Caco-2 (cell line): ENCODE measurements at regions of chr4 and their contacts with region 1.

Region 1: DNA sequence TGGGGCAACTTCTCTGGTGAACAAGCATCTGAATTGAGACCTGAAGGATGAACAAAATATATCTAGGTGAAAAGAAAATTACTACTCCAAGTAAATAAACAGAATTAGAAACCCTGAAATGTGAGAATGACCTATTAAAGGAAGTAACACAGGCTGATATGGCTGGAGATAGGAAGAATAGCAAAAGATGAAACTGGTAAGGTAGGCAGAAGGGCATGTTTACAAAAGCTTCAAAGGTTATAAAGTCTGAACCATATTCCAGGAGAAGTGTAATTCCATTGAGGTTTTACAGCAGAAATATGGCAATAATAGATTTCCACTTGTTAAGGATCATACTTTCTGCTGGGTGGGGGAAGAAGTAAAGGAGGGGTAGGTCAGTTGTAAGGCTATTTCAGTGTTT is 452.0 kb downstream of the GBA3 start:
- DNase-seq: no peak
- H3K4me3 ChIP-seq: no peak overlapping the region
- H3K4me3 Mint-ChIP-seq: no peak overlapping the region
- H3K27ac Mint-ChIP-seq: no peak overlapping the region
- H3K4me1 ChIP-seq: no peaks in the 10 kb centered on the region
- H3K4me1 Mint-ChIP-seq: peaks cover 7% of the 10 kb centered on the region
- H3K27me3 ChIP-seq: no peaks in the 10 kb centered on the region
- H3K27me3 Mint-ChIP-seq: no peaks in the 10 kb centered on the region
- CTCF ChIP-seq: no peak

Region 2: DNA sequence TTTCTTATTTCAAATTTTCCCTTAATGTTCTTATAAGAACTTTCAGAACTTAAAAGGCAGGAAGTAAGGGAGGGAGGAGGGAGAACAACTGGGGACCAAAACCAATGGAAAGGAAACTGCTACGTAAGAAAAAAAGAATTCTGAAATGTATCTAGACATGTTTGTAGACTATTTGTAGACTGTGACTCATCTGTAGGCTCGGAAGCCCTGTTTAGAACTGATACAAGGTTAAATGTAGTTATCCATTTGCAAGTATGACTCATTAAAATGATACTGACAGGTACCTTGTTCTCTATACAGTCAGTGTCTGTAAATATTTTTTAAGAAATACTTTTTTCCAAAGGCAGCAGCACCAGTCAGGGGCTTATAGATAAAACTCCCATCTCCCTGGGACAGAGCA is 1237.7 kb after region 1 on chr4:
- CTCF ChIA-PET with region 1: no interaction called
- POLR2A ChIA-PET with region 1: no interaction called
- intact Hi-C with region 1: loop called (anchors 10 kb)
- DNase-seq: no peak
- H3K4me3 ChIP-seq: no peak overlapping the region
- H3K4me3 Mint-ChIP-seq: no peak overlapping the region
- H3K27ac Mint-ChIP-seq: no peak overlapping the region
- H3K4me1 ChIP-seq: no peaks in the 10 kb centered on the region
- H3K4me1 Mint-ChIP-seq: no peaks in the 10 kb centered on the region
- H3K27me3 ChIP-seq: no peaks in the 10 kb centered on the region
- H3K27me3 Mint-ChIP-seq: peaks cover 12% of the 10 kb centered on the region
- CTCF ChIP-seq: no peak